Transverse colon (tissue), 4 donors: ENCODE measurements at regions of chr2 and their contacts with region 1.

Region 1: DNA sequence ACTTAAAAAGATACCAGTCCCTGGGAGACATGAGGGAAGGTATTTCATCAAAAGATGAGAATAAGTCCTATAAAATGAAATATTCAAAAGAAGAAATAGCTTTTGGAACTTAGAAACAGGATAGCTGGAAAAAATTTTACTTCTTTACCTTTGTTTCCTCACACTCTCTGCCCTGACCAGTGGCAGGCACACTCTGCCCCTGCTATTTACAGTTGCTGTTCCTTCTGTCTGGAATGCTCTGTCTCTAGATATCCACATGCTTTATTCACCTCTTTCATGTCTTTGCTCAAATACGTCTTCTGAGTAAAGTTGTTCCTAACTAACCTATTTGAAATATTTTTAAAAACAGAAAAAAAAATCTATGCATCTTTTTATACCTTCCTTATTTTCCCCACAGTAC is 125.6 kb downstream of the PTRHD1 start:
- DNase-seq: no peak
- H3K4me3 ChIP-seq: no peak overlapping the region
- H3K27ac ChIP-seq: no peak overlapping the region
- H3K4me1 ChIP-seq: no peaks in the 10 kb centered on the region
- H3K27me3 ChIP-seq: no peaks in the 10 kb centered on the region
- CTCF ChIP-seq: no peak
- EP300 ChIP-seq: no peak
- POLR2A ChIP-seq: no peak

Region 2: GRCh38 chr2:24509425-24509824 is 158.1 kb before region 1 on chr2:
- in situ Hi-C with region 1: no loop called
- intact Hi-C with region 1: no loop called
- DNase-seq: no peak
- H3K4me3 ChIP-seq: no peak overlapping the region
- H3K27ac ChIP-seq: no peak overlapping the region
- H3K4me1 ChIP-seq: peaks cover 0 to 32% (median 17%) of the 10 kb centered on the region in 4 donors
- H3K27me3 ChIP-seq: no peaks in the 10 kb centered on the region
- CTCF ChIP-seq: no peak
- EP300 ChIP-seq: no peak
- POLR2A ChIP-seq: no peak

Region 3: GRCh38 chr2:24621779-24622538 is 45.6 kb before region 1 on chr2:
- in situ Hi-C with region 1: no loop called
- intact Hi-C with region 1: loop called (anchors 1 kb)
- DNase-seq: no peak
- H3K4me3 ChIP-seq: no peak overlapping the region
- H3K27ac ChIP-seq: no peak overlapping the region
- H3K4me1 ChIP-seq: peaks cover 0 to 3% (median 0%) of the 10 kb centered on the region in 4 donors
- H3K27me3 ChIP-seq: no peaks in the 10 kb centered on the region
- CTCF ChIP-seq: no peak
- EP300 ChIP-seq: no peak
- POLR2A ChIP-seq: no peak

Region 4: DNA sequence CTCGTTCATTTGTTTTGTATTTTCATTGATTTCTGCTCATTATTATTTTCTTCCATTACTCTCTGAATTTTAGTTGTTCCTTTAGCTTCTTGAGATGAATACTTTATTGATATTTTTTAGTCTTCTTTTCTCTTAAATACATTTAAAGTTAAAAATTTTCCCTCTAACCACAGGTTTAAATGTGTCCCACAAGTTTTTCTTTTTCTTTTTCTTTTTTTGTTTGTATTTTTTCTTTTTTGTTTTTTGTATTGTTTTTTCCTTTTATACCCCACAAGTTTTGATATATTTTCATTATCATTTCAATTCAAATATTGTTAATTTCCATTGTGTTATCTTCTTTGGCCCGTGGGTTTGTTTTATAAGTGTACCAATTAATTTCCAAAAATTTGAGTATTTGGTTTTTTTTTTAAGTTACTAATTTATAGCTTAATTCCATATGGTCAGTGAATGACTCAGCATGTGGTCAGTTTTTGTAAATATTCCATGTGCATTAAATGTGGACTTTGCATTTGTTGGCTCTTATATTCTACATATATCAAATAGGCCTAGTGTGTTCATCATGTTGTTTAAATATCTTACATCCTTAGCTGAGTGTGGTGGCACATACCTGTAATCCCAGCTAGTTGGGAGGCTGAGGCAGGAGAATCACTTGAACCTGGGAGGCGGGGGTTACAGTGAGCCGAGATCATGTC is 141.9 kb after region 1 on chr2:
- in situ Hi-C with region 1: no loop called
- intact Hi-C with region 1: no loop called
- DNase-seq: no peak
- H3K4me3 ChIP-seq: no peak overlapping the region
- H3K27ac ChIP-seq: no peak overlapping the region
- H3K4me1 ChIP-seq: peaks cover 0 to 19% (median 8%) of the 10 kb centered on the region in 4 donors
- H3K27me3 ChIP-seq: no peaks in the 10 kb centered on the region
- CTCF ChIP-seq: no peak
- EP300 ChIP-seq: no peak
- POLR2A ChIP-seq: no peak